ENCODE measurements at regions of chr16 and their contacts with region 1.

Region 1: GRCh38 chr16:83952940-83953795 is at the start of gene OSGIN1:
- DNase-seq: peak; percentile 30 to 92 (median 87)
- H3K4me3 ChIP-seq: peak within 1 kb of the TSS; percentile 25 to 80 (median 59)
- H3K27ac ChIP-seq: peak within 1 kb of the TSS; percentile 20 to 94 (median 83)
- H3K27me3 ChIP-seq: no peaks in the 10 kb centered on the region
- CTCF ChIP-seq: peak in 2 of 56 donors; percentile 8 to 23
- total RNA-seq, gene OSGIN1: 1.5 to 15.5 (median 5.1) TPM

Region 2: DNA sequence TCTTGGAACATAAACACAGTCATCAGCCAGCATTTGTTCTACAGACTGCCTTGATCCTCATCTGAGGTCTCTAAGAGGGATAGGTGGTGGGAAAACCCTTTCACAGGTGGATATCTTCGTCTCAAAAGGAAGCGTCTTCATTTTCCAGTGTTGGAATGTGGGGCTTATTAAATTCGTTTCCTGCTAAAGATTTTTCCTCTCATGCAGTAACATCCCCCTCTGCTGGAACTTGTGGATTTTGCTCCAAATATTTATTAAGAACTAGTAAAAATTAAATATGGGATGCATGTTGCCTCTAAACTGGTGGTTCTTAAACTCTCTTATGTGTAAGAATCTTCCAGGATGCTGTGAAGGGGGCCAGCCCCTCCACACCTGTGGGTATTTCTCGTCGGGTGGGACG is 74.3 kb before region 1 on chr16:
- intact Hi-C with region 1: no loop called
- DNase-seq: no peak
- H3K4me3 ChIP-seq: no peak overlapping the region
- H3K27ac ChIP-seq: no peak overlapping the region
- H3K27me3 ChIP-seq: no peaks in the 10 kb centered on the region
- CTCF ChIP-seq: peak in 55 of 56 donors; percentile 26 to 77 (median 60)

Region 3: GRCh38 chr16:83898463-83899271 is 54.5 kb before region 1 on chr16 and contains the start of gene MLYCD:
- intact Hi-C with region 1: loop called in 1 of 2 experiments (anchors 5 kb)
- DNase-seq: peak; percentile 67 to 91 (median 80)
- H3K4me3 ChIP-seq: peak within 1 kb of the TSS; percentile 62 to 96 (median 86)
- H3K27ac ChIP-seq: peak within 1 kb of the TSS; percentile 65 to 98 (median 92)
- H3K27me3 ChIP-seq: no peaks in the 10 kb centered on the region
- CTCF ChIP-seq: peak in 11 of 56 donors; percentile 4 to 42 (median 12)
- total RNA-seq, gene MLYCD: 5.7 to 18.1 (median 9.9) TPM

Region 4: DNA sequence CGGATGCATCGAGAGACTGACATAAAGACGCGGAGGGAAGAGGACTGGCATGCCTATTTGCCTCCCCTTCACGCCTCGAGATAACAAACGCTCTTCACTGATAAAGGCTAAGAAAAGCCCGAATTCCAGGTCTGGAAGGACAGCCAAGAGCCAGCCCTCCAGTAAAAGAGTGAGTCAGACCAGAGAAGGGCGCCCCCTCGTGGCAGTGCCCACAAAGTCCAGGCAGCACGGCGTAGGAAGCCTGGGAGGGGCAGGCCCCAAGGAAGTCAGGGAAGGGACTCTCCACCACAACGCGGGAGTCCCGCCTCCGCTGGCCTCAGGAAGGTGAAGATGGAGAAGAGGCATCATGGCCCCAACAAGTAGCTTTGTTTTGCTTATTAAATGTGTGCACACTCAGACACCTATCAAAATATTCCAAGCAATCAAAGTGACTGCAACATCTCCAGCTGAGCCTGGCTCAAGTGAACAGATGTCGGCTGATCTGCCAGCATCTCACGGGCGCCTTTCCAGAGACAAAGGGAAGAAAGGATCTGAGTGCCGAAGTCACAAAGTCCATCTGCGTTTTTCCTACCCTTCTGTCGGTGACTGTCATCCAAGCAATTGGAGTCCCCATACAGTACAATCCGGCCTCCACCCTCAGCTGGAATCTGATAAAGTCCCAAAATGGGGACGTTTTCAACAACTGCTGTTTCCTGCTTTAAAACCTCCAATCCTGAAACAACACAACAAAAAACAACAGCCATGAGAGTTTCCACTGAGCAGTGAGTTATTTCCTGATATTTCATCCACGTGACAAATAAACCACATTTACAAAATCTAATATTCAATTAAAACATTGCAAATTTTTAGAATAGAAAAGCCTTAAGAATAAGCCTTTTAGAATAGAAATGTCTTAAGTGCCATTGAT is 109.8 kb after region 1 on chr16:
- intact Hi-C with region 1: loop called in 1 of 2 experiments (anchors 1 kb)
- DNase-seq: peak; percentile 69 to 84 (median 82)
- H3K4me3 ChIP-seq: no peak overlapping the region
- H3K27ac ChIP-seq: peak overlapping the region in 39 of 59 donors; percentile 2 to 68 (median 27)
- H3K27me3 ChIP-seq: no peaks in the 10 kb centered on the region
- CTCF ChIP-seq: peak; percentile 78 to 98 (median 89)